ENCODE measurements at regions of chr22 and their contacts with region 1.

Region 1: DNA sequence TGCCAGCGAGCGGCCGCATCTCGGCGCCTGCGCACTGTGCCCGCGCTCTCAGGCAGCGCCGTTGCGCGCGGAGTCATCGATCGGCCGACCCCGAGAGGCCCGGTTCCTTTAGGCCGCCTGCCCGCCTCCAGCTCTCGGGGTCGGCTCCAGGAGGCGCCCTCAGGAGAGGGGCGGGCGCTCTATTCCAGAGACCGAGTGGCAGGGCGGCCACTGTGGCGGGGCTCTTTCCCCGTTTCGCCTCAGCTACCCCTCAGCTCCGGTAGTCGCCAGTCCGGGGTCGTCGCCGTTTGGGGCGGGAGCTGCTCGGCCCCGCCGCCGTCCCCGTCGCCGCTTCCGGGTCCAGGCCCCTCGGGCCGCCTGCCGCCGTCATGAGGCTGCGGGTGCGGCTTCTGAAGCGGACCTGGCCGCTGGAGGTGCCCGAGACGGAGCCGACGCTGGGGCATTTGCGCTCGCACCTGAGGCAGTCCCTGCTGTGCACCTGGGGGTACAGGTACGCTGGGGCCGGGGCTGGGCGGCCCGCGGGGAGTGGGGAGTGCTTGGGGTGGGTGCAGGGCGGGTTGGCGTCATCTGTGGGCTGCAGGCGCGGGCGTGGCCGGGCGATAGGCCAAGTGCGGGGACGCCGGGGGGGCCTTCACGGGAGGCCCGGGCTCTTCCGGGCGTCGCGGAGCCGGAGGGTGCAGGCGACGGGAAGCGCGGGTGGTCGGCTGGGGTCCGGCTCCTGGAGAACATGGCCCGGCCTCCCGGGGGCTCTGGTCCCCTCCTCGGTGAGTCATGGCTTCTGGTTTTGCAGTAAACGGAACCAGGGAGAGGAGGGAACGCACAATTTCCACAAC is at the start of gene FBXO7:
- DNase-seq: peak; percentile 84 to 91 (median 84)
- ATAC-seq: peak; percentile 89
- H3K4me3 ChIP-seq: peak within 1 kb of the TSS; percentile 80
- H3K27ac ChIP-seq: peak within 1 kb of the TSS; percentile 90
- H3K4me1 ChIP-seq: peaks cover 7 to 10% of the 10 kb centered on the region in 2 experiments; a peak in 4 of 5 replicates
- H3K27me3 ChIP-seq: no peaks in the 10 kb centered on the region; a peak in 1 of 5 replicates
- CTCF ChIP-seq: peak in 2 of 3 experiments; percentile 35 to 36; a peak in 3 of 6 replicates
- EP300 ChIP-seq: no peak
- POLR2A ChIP-seq: peak; percentile 82
- RAD21 ChIP-seq: no peak
- polyA plus RNA-seq, gene FBXO7: 34.0 to 45.5 TPM

Region 2: GRCh38 chr22:32378707-32379272 is 96.1 kb before region 1 on chr22:
- CTCF ChIA-PET with region 1: no interaction called
- POLR2A ChIA-PET with region 1: no interaction called
- in situ Hi-C with region 1: no loop called
- intact Hi-C with region 1: loop called (anchors 5 kb)
- DNase-seq: peak; percentile 72 to 74 (median 72)
- ATAC-seq: peak; percentile 98
- H3K4me3 ChIP-seq: no peak overlapping the region
- H3K27ac ChIP-seq: no peak overlapping the region
- H3K4me1 ChIP-seq: peaks cover 0 to 8% of the 10 kb centered on the region in 2 experiments; a peak in 3 of 5 replicates
- H3K27me3 ChIP-seq: no peaks in the 10 kb centered on the region
- CTCF ChIP-seq: peak; percentile 91 to 99 (median 99)
- EP300 ChIP-seq: no peak
- POLR2A ChIP-seq: no peak
- RAD21 ChIP-seq: peak; percentile 43 to 77; a peak in 3 of 4 replicates

Region 3: DNA sequence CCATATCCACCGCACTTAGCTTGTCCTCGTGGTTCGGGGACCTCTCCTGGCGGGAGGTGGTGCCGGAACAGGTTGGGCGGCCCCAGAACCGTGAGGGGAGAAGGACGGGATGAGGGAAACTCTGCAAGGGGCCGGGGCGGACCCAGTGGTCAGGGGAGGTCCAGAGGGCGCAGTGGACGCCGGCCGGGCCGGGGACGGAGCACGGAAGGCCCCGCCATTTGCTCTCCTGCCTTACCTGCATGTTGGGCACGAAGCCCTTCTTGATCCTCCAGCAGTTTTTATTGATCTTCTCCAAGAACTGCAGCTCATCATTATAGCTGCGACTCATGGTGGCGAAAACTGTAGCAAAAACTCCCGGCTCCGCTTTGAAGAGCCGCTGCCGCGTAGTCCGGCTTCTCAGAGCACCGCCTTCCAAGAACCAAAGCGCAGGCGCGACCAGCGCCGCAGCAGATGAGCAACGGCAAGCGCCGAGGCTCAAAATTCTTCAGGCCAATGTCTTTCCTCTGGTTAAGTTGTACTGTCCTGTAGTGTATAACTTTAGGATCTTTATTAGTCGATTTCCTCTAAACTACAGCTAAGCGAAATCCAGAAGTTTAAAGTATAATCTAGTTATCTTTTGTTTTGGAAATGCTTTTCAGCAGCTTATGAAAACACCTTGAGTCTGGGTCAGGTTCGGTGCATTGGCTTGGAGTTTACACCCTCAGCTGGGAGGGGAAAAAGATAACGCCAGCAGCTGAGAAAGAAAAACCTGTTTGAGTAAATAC is 62.8 kb before region 1 on chr22 and contains the start of gene RTCB:
- CTCF ChIA-PET with region 1: no interaction called
- POLR2A ChIA-PET with region 1: interaction called, 3 read pairs
- in situ Hi-C with region 1: no loop called
- intact Hi-C with region 1: loop called (anchors 5 kb)
- DNase-seq: peak; percentile 68 to 91 (median 68)
- ATAC-seq: peak; percentile 89
- H3K4me3 ChIP-seq: peak within 1 kb of the TSS; percentile 75
- H3K27ac ChIP-seq: peak within 1 kb of the TSS; percentile 72
- H3K4me1 ChIP-seq: peaks cover 9 to 10% of the 10 kb centered on the region in 2 experiments; a peak in 3 of 5 replicates
- H3K27me3 ChIP-seq: no peaks in the 10 kb centered on the region
- CTCF ChIP-seq: no peak
- EP300 ChIP-seq: no peak
- POLR2A ChIP-seq: peak; percentile 71
- RAD21 ChIP-seq: no peak
- polyA plus RNA-seq, gene RTCB: 92.3 to 269 TPM

Region 4: GRCh38 chr22:32486656-32487390 is 12.0 kb after region 1 on chr22:
- CTCF ChIA-PET with region 1: no interaction called
- POLR2A ChIA-PET with region 1: interaction called, 11 read pairs
- in situ Hi-C with region 1: no loop called
- intact Hi-C with region 1: no loop called
- DNase-seq: no peak
- ATAC-seq: no peak
- H3K4me3 ChIP-seq: no peak overlapping the region
- H3K27ac ChIP-seq: no peak overlapping the region
- H3K4me1 ChIP-seq: peaks cover 0 to 20% of the 10 kb centered on the region in 2 experiments; a peak in 3 of 5 replicates
- H3K27me3 ChIP-seq: no peaks in the 10 kb centered on the region
- CTCF ChIP-seq: no peak
- EP300 ChIP-seq: no peak
- POLR2A ChIP-seq: no peak
- RAD21 ChIP-seq: no peak

Region 5: GRCh38 chr22:32501836-32502745 is 27.2 kb after region 1 on chr22:
- CTCF ChIA-PET with region 1: no interaction called
- POLR2A ChIA-PET with region 1: no interaction called
- in situ Hi-C with region 1: no loop called
- intact Hi-C with region 1: no loop called
- DNase-seq: no peak
- ATAC-seq: peak; percentile 61
- H3K4me3 ChIP-seq: no peak overlapping the region
- H3K27ac ChIP-seq: no peak overlapping the region
- H3K4me1 ChIP-seq: no peaks in the 10 kb centered on the region
- H3K27me3 ChIP-seq: no peaks in the 10 kb centered on the region
- CTCF ChIP-seq: no peak
- EP300 ChIP-seq: no peak
- POLR2A ChIP-seq: no peak
- RAD21 ChIP-seq: no peak

Region 6: DNA sequence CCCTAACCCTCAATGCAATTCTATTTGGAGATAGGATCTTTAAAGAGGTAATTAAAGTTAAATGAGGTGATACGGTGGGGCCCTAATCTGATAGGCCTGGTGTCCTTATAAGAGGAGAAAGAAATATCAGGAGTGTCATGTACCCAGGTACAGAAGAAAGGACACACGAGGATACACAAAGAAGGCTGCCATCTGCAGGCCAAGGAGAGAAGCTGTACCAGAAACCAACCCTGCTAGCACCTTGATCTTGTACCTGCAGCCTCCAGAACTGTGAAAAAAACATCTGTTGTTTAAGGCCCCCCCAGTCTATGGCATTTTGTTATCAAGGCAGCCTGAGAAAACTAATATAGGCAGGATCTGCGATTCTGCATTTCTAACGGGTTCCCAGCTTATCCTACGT is 44.0 kb after region 1 on chr22:
- CTCF ChIA-PET with region 1: no interaction called
- POLR2A ChIA-PET with region 1: no interaction called
- in situ Hi-C with region 1: no loop called
- intact Hi-C with region 1: loop called (anchors 2 kb)
- DNase-seq: peak in 3 of 4 experiments; percentile 25 to 42 (median 29)
- ATAC-seq: peak; percentile 71
- H3K4me3 ChIP-seq: no peak overlapping the region
- H3K27ac ChIP-seq: no peak overlapping the region
- H3K4me1 ChIP-seq: no peaks in the 10 kb centered on the region
- H3K27me3 ChIP-seq: no peaks in the 10 kb centered on the region; a peak in 1 of 5 replicates
- CTCF ChIP-seq: peak; percentile 20 to 45 (median 41); a peak in 5 of 6 replicates
- EP300 ChIP-seq: no peak
- POLR2A ChIP-seq: no peak
- RAD21 ChIP-seq: peak in 1 of 2 experiments; percentile 43; a peak in 2 of 4 replicates

Region 7: DNA sequence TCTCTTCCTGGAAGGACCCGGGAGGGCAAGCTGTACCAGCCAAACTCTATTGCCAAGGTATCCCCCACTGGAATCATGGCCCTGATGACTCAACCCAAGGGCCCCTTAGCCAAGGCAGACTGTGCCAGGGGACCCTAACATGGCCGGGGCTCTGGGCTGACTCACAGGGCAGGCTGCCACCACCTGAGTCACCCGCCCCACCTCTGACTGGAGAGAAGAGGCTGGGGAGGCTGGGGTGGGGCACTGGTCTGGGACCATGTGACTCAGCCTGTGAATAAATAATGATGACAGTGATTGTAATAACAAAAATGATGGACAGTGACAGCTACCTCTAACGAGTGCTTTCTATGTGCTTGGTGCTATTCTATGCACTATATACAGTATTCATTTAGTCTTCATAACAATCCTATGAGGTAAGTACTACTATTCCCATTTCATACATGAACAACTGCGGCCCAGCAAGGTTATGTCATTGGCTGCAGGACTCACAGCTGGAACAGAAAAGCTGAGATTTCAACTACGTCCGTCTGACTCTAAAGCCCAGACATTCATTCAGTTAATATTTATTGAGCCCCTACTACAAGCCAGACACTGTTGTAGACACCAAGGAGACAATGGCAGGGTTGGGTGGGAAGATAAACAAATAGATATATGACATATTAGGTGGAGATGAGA is 84.0 kb after region 1 on chr22:
- CTCF ChIA-PET with region 1: no interaction called
- POLR2A ChIA-PET with region 1: no interaction called
- in situ Hi-C with region 1: no loop called
- intact Hi-C with region 1: no loop called
- DNase-seq: no peak
- ATAC-seq: no peak
- H3K4me3 ChIP-seq: no peak overlapping the region
- H3K27ac ChIP-seq: no peak overlapping the region
- H3K4me1 ChIP-seq: no peaks in the 10 kb centered on the region; a peak in 1 of 5 replicates
- H3K27me3 ChIP-seq: no peaks in the 10 kb centered on the region
- CTCF ChIP-seq: no peak
- EP300 ChIP-seq: no peak
- POLR2A ChIP-seq: no peak
- RAD21 ChIP-seq: no peak